Caco-2 (cell line): ENCODE measurements at regions of chr14 and their contacts with region 1.

Region 1: DNA sequence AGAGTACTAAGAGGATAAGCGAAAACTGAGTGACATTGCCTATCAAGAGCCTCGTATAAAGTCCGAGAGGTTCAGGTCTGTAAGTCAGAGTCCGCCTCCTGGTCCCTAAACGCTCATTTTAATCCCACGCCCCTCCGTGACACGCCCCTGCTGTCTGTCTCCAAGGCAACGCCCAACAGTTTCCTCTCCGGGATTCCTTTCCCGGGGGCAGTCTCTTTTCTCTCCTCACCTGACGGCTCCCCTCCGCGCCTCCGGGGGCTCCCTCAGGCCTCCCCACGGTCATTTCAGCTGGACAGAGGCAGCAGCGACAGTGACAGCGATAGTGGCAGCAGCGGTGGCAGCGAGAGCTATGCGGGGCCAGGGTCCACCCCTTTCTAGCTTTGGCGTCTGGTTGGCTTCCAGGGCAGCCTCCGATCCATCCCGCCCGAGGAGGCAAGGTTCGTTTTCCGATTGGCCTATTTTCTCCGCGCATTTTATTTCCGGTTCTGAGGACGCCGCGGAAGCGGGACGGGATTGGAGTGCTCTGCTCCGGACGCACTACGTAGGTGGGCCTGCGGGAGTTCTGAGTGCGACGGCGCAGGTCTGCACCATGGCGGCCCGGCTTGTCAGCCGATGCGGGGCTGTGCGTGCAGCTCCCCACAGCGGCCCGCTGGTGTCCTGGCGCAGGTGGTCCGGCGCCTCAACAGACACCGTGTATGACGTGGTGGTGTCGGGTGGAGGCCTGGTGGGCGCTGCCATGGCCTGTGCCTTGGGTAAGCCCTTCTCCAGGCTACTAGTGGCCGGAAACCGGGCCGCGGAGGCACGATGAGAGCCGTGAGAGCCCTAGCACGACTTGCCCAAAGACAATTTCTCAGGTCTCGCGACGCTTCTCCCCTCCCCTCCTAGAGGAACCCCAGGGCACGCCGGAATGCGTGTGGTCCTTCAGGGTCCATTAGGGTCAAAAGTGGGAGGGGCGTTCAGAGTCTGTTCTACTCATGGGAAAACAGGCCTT is at the starts of genes COQ6 and FAM161B:
- DNase-seq: peak; percentile 96 to 97
- H3K4me3 ChIP-seq: peak within 1 kb of the TSS; percentile 78
- H3K4me3 Mint-ChIP-seq: peak within 1 kb of the TSS; percentile 93
- H3K27ac Mint-ChIP-seq: peak within 1 kb of the TSS; percentile 81
- H3K4me1 ChIP-seq: peaks cover 15% of the 10 kb centered on the region
- H3K4me1 Mint-ChIP-seq: no peaks in the 10 kb centered on the region
- H3K27me3 ChIP-seq: peaks cover 2% of the 10 kb centered on the region; the same call in 1 of the 2 replicates
- H3K27me3 Mint-ChIP-seq: no peaks in the 10 kb centered on the region
- CTCF ChIP-seq: peak in 1 of 2 experiments; percentile 13
- total RNA-seq, gene COQ6: 18.0 and 21.3 TPM in 2 replicates
- total RNA-seq, gene FAM161B: 1.4 and 1.6 TPM in 2 replicates

Region 2: DNA sequence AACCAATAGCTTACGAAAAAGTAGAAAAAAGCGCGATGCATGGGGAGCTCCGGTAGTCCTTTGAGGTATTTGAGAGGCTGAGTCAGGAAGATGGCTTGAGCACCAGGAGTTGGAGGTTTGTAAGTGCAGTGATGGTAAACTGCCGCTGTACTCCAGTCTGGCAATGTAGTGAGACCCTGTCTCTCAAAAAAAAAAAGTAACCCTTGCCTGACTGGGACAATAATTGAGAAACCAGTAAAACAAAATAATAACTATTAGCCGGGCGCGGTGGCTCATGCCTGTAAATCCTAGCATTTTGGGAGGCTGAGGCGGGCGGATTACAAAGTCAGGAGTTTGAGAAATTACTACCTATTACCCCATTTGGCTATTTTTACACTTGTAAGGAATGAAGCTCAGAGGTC is 381.7 kb before region 1 on chr14:
- CTCF ChIA-PET with region 1: no interaction called
- POLR2A ChIA-PET with region 1: interaction called, 13 read pairs
- intact Hi-C with region 1: no loop called
- DNase-seq: peak in 1 of 2 experiments; percentile 30
- H3K4me3 ChIP-seq: peak overlapping the region; percentile 47
- H3K4me3 Mint-ChIP-seq: peak overlapping the region; percentile 95
- H3K27ac Mint-ChIP-seq: peak overlapping the region; percentile 95
- H3K4me1 ChIP-seq: peaks cover 11% of the 10 kb centered on the region
- H3K4me1 Mint-ChIP-seq: peaks cover 6% of the 10 kb centered on the region
- H3K27me3 ChIP-seq: no peaks in the 10 kb centered on the region
- H3K27me3 Mint-ChIP-seq: no peaks in the 10 kb centered on the region
- CTCF ChIP-seq: no peak

Region 3: DNA sequence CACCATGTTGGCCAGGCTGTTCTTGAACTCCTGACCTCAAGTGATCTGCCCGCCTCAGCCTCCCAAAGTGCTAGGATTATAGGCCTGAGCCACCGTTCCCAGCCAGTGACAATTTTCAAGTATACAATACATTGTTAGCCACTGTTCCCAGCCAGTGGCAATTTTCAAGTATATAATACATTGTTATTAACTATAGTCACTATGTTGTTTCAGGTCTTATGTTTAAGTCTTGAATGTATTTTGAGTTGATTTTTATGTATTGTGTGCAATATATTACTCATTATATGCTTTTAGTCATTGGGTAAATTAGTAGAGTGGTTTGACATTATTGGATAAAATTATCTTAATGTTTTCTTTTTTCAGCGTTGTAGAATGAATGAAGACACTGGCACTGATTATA is 76.4 kb before region 1 on chr14:
- CTCF ChIA-PET with region 1: no interaction called
- POLR2A ChIA-PET with region 1: no interaction called
- intact Hi-C with region 1: no loop called
- DNase-seq: no peak
- H3K4me3 ChIP-seq: no peak overlapping the region
- H3K4me3 Mint-ChIP-seq: no peak overlapping the region
- H3K27ac Mint-ChIP-seq: no peak overlapping the region
- H3K4me1 ChIP-seq: no peaks in the 10 kb centered on the region
- H3K4me1 Mint-ChIP-seq: peaks cover 4% of the 10 kb centered on the region
- H3K27me3 ChIP-seq: no peaks in the 10 kb centered on the region
- H3K27me3 Mint-ChIP-seq: no peaks in the 10 kb centered on the region
- CTCF ChIP-seq: no peak

Region 4: DNA sequence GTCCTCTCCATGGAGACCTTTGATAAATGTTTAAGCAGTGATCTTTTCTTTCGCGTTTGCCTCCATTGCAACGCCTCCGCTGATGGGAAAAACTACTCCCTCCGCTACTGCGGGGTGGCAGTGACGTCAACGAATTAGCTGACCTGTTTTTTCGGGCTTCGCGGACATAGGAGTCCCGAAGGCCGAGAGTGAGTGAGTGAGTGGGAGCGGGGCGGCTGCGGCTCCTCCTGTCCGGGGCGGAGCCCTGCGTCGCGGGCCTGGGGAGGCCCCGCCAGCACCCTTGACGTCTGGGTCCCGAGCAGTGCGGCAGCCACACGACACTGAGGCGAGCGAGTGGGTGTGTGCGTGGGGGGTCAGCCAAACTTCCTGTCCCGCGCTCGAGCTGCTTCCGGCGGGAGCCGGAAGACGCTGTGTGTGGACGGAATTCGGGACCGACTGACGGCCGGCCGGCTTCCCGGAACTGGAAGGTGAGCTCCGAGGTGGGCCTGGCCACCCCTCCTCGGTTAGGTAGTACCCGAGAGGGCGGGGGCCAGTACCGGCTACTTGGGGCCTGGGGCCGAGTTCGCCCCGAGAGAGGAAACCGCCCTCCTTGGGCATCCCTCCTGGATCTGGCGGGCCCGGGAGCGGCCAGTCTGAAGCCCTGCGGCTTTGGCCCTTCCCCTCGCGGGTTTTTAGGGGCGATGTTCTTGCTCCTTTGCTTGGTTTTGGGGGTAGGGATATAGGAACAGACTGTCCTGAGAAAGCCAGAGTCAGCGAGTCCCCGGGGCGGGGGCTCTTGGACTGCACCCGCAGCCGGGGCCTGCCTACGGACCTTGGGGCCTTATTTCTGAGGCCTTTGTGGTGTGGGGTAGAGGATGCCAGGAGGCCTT is 63.4 kb before region 1 on chr14 and contains the start of gene ZNF410:
- CTCF ChIA-PET with region 1: no interaction called
- POLR2A ChIA-PET with region 1: interaction called, 6 read pairs
- intact Hi-C with region 1: loop called (anchors 5 kb)
- DNase-seq: peak; percentile 94 to 95
- H3K4me3 ChIP-seq: peak within 1 kb of the TSS; percentile 69
- H3K4me3 Mint-ChIP-seq: peak within 1 kb of the TSS; percentile 96
- H3K27ac Mint-ChIP-seq: peak within 1 kb of the TSS; percentile 98
- H3K4me1 ChIP-seq: peaks cover 17% of the 10 kb centered on the region
- H3K4me1 Mint-ChIP-seq: peaks cover 26% of the 10 kb centered on the region
- H3K27me3 ChIP-seq: no peaks in the 10 kb centered on the region
- H3K27me3 Mint-ChIP-seq: no peaks in the 10 kb centered on the region
- CTCF ChIP-seq: no peak
- total RNA-seq, gene ZNF410: 35.9 and 36.8 TPM in 2 replicates

Region 5: DNA sequence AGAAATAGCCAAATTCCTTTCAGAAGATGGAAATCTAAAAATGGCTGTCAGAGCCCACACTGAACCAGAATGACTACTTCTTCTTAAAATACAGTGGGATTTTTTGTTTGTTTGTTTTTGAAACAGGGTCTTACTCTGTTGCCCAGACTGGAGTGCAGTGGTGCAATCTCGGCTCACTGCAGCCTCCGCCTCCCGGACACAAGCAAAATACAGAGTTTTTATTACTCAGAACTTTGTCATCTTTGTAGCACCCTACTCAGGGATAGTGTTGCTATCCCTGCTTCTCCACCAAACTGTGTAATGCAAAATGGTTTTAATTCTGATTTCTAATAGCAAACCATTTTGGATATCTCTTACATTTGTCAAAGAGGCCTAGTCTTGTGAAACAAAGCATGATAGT is 47.0 kb before region 1 on chr14:
- CTCF ChIA-PET with region 1: no interaction called
- POLR2A ChIA-PET with region 1: no interaction called
- intact Hi-C with region 1: no loop called
- DNase-seq: no peak
- H3K4me3 ChIP-seq: no peak overlapping the region
- H3K4me3 Mint-ChIP-seq: no peak overlapping the region
- H3K27ac Mint-ChIP-seq: no peak overlapping the region
- H3K4me1 ChIP-seq: no peaks in the 10 kb centered on the region
- H3K4me1 Mint-ChIP-seq: no peaks in the 10 kb centered on the region
- H3K27me3 ChIP-seq: no peaks in the 10 kb centered on the region
- H3K27me3 Mint-ChIP-seq: no peaks in the 10 kb centered on the region
- CTCF ChIP-seq: no peak

Region 6: GRCh38 chr14:73997108-73997943 is 47.3 kb after region 1 on chr14:
- CTCF ChIA-PET with region 1: no interaction called
- POLR2A ChIA-PET with region 1: interaction called, 4 read pairs
- intact Hi-C with region 1: loop called (anchors 2 kb)
- DNase-seq: peak in 1 of 2 experiments; percentile 14
- H3K4me3 ChIP-seq: no peak overlapping the region
- H3K4me3 Mint-ChIP-seq: peak overlapping the region; percentile 42
- H3K27ac Mint-ChIP-seq: peak overlapping the region; percentile 69
- H3K4me1 ChIP-seq: peaks cover 45% of the 10 kb centered on the region
- H3K4me1 Mint-ChIP-seq: peaks cover 27% of the 10 kb centered on the region
- H3K27me3 ChIP-seq: no peaks in the 10 kb centered on the region
- H3K27me3 Mint-ChIP-seq: no peaks in the 10 kb centered on the region
- CTCF ChIP-seq: no peak

Region 7: GRCh38 chr14:74018586-74019407 is 68.8 kb after region 1 on chr14 and contains the starts of genes BBOF1 and ENTPD5:
- CTCF ChIA-PET with region 1: interaction called, 4 read pairs
- POLR2A ChIA-PET with region 1: no interaction called
- intact Hi-C with region 1: loop called (anchors 2 kb)
- DNase-seq: peak; percentile 86 to 90
- H3K4me3 ChIP-seq: peak within 1 kb of the TSS; percentile 51
- H3K4me3 Mint-ChIP-seq: peak within 1 kb of the TSS; percentile 90
- H3K27ac Mint-ChIP-seq: peak within 1 kb of the TSS; percentile 90
- H3K4me1 ChIP-seq: peaks cover 10% of the 10 kb centered on the region
- H3K4me1 Mint-ChIP-seq: peaks cover under 1% of the 10 kb centered on the region
- H3K27me3 ChIP-seq: no peaks in the 10 kb centered on the region
- H3K27me3 Mint-ChIP-seq: no peaks in the 10 kb centered on the region
- CTCF ChIP-seq: no peak
- total RNA-seq, gene BBOF1: 0.66 and 0.91 TPM in 2 replicates
- total RNA-seq, gene ENTPD5: 9.1 and 9.3 TPM in 2 replicates

Region 8: GRCh38 chr14:74029136-74029535 is 79.1 kb after region 1 on chr14:
- CTCF ChIA-PET with region 1: interaction called, 4 read pairs
- POLR2A ChIA-PET with region 1: no interaction called
- intact Hi-C with region 1: loop called (anchors 2 kb)
- DNase-seq: peak in 1 of 2 experiments; percentile 3
- H3K4me3 ChIP-seq: no peak overlapping the region
- H3K4me3 Mint-ChIP-seq: no peak overlapping the region
- H3K27ac Mint-ChIP-seq: no peak overlapping the region
- H3K4me1 ChIP-seq: peaks cover 19% of the 10 kb centered on the region
- H3K4me1 Mint-ChIP-seq: peaks cover 13% of the 10 kb centered on the region
- H3K27me3 ChIP-seq: no peaks in the 10 kb centered on the region
- H3K27me3 Mint-ChIP-seq: no peaks in the 10 kb centered on the region
- CTCF ChIP-seq: no peak